CD4-positive, alpha-beta memory T cell (primary cell): ENCODE measurements at regions of chr10 and their contacts with region 1.

Region 1: GRCh38 chr10:22228943-22229801 is 11.4 kb upstream of the EBLN1 start:
- DNase-seq: peak; percentile 90 to 92 (median 92)
- H3K4me3 ChIP-seq: peak overlapping the region; percentile 61
- H3K4me3 Mint-ChIP-seq: peak overlapping the region; percentile 87 to 98 (median 95)
- H3K27ac ChIP-seq: peak overlapping the region; percentile 61
- H3K27ac Mint-ChIP-seq: peak overlapping the region; percentile 86 to 100 (median 99)
- H3K4me1 ChIP-seq: peaks cover 15% of the 10 kb centered on the region
- H3K4me1 Mint-ChIP-seq: peaks cover 15 to 35% (median 16%) of the 10 kb centered on the region in 4 donors
- H3K27me3 ChIP-seq: no peaks in the 10 kb centered on the region
- H3K27me3 Mint-ChIP-seq: peaks cover 5 to 7% of the 10 kb centered on the region in 2 donors

Region 2: GRCh38 chr10:21533467-21534279 is 695.5 kb before region 1 on chr10 and contains the start of gene MLLT10:
- CTCF ChIA-PET with region 1: no interaction called
- POLR2A ChIA-PET with region 1: interaction called, 4 read pairs
- intact Hi-C with region 1: loop called (anchors 1 kb)
- DNase-seq: peak; percentile 93 to 96 (median 95)
- H3K4me3 ChIP-seq: peak within 1 kb of the TSS; percentile 69 to 88
- H3K4me3 Mint-ChIP-seq: peak within 1 kb of the TSS; percentile 92 to 99 (median 95)
- H3K27ac ChIP-seq: peak within 1 kb of the TSS; percentile 63
- H3K27ac Mint-ChIP-seq: peak within 1 kb of the TSS; percentile 85 to 98 (median 95)
- H3K4me1 ChIP-seq: peaks cover 19% of the 10 kb centered on the region
- H3K4me1 Mint-ChIP-seq: peaks cover 10 to 33% (median 21%) of the 10 kb centered on the region in 4 donors
- H3K27me3 ChIP-seq: no peaks in the 10 kb centered on the region
- H3K27me3 Mint-ChIP-seq: no peaks in the 10 kb centered on the region
- total RNA-seq, gene MLLT10: 64.6 to 73.4 TPM

Region 3: GRCh38 chr10:22022257-22023032 is 206.7 kb before region 1 on chr10:
- CTCF ChIA-PET with region 1: no interaction called
- POLR2A ChIA-PET with region 1: interaction called, 4 read pairs
- intact Hi-C with region 1: loop called (anchors 5 kb)
- DNase-seq: peak; percentile 51 to 75 (median 60)
- H3K4me3 ChIP-seq: peak overlapping the region in 1 of 2 donors; percentile 39
- H3K4me3 Mint-ChIP-seq: peak overlapping the region; percentile 69 to 91 (median 86)
- H3K27ac ChIP-seq: peak overlapping the region; percentile 45
- H3K27ac Mint-ChIP-seq: peak overlapping the region; percentile 75 to 97 (median 95)
- H3K4me1 ChIP-seq: peaks cover 18% of the 10 kb centered on the region
- H3K4me1 Mint-ChIP-seq: peaks cover 15 to 21% (median 19%) of the 10 kb centered on the region in 4 donors
- H3K27me3 ChIP-seq: no peaks in the 10 kb centered on the region
- H3K27me3 Mint-ChIP-seq: peaks cover 0 to 4% of the 10 kb centered on the region in 2 donors

Region 4: DNA sequence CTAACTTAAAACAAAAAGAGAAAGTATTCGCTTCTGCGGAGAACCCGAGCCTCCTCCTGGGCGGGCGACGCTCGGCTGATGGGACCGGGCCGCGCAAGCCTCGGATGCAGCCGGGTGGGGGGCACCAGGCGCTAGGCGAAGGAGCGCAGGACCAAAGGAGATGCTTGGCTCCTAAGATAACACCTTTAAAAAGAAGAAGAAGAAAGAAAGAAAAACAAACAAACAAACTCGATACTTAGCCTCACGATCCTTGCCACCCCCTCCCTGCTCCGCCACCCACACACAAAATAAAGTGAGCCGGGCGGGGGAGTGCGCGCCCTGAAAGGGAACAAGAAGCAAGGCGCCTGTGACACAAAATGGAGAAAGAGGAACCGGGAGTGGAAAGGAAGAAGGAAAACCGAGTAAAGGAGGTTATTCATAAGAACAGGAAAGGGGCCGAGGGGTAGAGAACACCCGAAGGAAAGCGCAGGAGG is 22.6 kb after region 1 on chr10:
- CTCF ChIA-PET with region 1: interaction called, 14 read pairs
- POLR2A ChIA-PET with region 1: interaction called, 66 read pairs
- intact Hi-C with region 1: loop called (anchors 1 kb)
- DNase-seq: peak; percentile 76 to 80 (median 78)
- H3K4me3 ChIP-seq: peak overlapping the region; percentile 70 to 97
- H3K4me3 Mint-ChIP-seq: peak overlapping the region; percentile 89 to 99 (median 96)
- H3K27ac ChIP-seq: peak overlapping the region; percentile 78
- H3K27ac Mint-ChIP-seq: peak overlapping the region; percentile 96 to 100 (median 98)
- H3K4me1 ChIP-seq: peaks cover 43% of the 10 kb centered on the region
- H3K4me1 Mint-ChIP-seq: peaks cover 12 to 58% (median 35%) of the 10 kb centered on the region in 4 donors
- H3K27me3 ChIP-seq: no peaks in the 10 kb centered on the region
- H3K27me3 Mint-ChIP-seq: peaks cover 0 to 2% of the 10 kb centered on the region in 2 donors

Region 5: GRCh38 chr10:22305721-22306120 is 76.5 kb after region 1 on chr10:
- CTCF ChIA-PET with region 1: no interaction called
- POLR2A ChIA-PET with region 1: no interaction called
- intact Hi-C with region 1: no loop called
- DNase-seq: no peak
- H3K4me3 ChIP-seq: no peak overlapping the region
- H3K4me3 Mint-ChIP-seq: no peak overlapping the region
- H3K27ac ChIP-seq: no peak overlapping the region
- H3K27ac Mint-ChIP-seq: no peak overlapping the region
- H3K4me1 ChIP-seq: no peaks in the 10 kb centered on the region
- H3K4me1 Mint-ChIP-seq: no peaks in the 10 kb centered on the region
- H3K27me3 ChIP-seq: no peaks in the 10 kb centered on the region
- H3K27me3 Mint-ChIP-seq: peaks cover 0 to 5% of the 10 kb centered on the region in 2 donors

Region 6: DNA sequence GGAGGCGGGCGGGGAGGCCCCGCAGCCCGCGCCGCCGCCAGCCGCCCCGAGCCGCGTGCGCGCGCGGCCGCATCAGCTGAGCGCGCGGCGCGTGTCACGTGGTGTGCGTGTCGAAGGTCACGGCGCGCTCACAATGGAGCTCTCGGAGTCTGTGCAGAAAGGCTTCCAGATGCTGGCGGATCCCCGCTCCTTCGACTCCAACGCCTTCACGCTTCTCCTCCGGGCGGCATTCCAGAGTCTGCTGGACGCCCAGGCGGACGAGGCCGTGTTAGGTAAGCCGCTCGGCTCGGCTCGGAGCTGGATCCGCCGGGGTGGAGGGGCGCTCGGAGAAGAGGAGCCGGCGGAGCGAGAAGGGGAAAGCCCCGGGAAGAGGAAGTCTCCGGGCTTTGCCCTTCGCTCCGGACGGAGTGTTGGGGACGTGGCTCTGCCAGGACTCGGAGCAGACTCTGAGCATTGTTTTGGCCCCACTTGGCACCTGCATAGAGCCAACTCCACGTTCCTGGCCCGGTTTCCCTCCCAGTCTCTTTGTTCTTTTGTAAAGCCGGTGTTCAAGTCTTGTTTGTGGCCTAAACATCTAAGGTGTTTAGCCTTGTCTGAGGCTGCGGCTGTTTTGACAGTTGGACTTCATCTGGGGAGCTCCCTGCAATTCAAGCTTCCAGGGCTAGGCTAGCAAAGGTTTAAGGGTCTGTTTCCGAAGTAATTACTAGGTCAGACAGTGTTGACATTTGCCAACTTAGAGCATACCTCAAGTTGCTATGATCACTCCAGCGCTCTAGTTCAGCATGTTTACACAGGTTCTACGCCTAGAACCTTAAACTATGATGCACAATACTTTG is 87.3 kb after region 1 on chr10 and contains the start of gene COMMD3:
- CTCF ChIA-PET with region 1: interaction called, 10 read pairs
- POLR2A ChIA-PET with region 1: interaction called, 68 read pairs
- intact Hi-C with region 1: loop called (anchors 1 kb)
- DNase-seq: peak; percentile 78 to 86 (median 82)
- H3K4me3 ChIP-seq: peak within 1 kb of the TSS; percentile 77 to 95
- H3K4me3 Mint-ChIP-seq: peak within 1 kb of the TSS; percentile 94 to 99 (median 98)
- H3K27ac ChIP-seq: peak within 1 kb of the TSS; percentile 71
- H3K27ac Mint-ChIP-seq: peak within 1 kb of the TSS; percentile 89 to 98 (median 98)
- H3K4me1 ChIP-seq: peaks cover 37% of the 10 kb centered on the region
- H3K4me1 Mint-ChIP-seq: peaks cover 22 to 50% (median 29%) of the 10 kb centered on the region in 4 donors
- H3K27me3 ChIP-seq: no peaks in the 10 kb centered on the region
- H3K27me3 Mint-ChIP-seq: peaks cover 3 to 4% of the 10 kb centered on the region in 2 donors
- total RNA-seq, gene COMMD3: 67.9 to 68.5 TPM

Region 7: GRCh38 chr10:22335173-22336123 is 106.3 kb after region 1 on chr10:
- CTCF ChIA-PET with region 1: no interaction called
- POLR2A ChIA-PET with region 1: interaction called, 15 read pairs
- intact Hi-C with region 1: loop called (anchors 1 kb)
- DNase-seq: peak; percentile 80 to 88 (median 84)
- H3K4me3 ChIP-seq: peak overlapping the region; percentile 9 to 52
- H3K4me3 Mint-ChIP-seq: peak overlapping the region; percentile 84 to 96 (median 87)
- H3K27ac ChIP-seq: peak overlapping the region; percentile 58
- H3K27ac Mint-ChIP-seq: peak overlapping the region; percentile 92 to 96 (median 95)
- H3K4me1 ChIP-seq: peaks cover 59% of the 10 kb centered on the region
- H3K4me1 Mint-ChIP-seq: peaks cover 23 to 54% (median 34%) of the 10 kb centered on the region in 4 donors
- H3K27me3 ChIP-seq: peaks cover 45% of the 10 kb centered on the region
- H3K27me3 Mint-ChIP-seq: peaks cover 23 to 40% of the 10 kb centered on the region in 2 donors